ENCODE measurements at regions of chr2 and their contacts with region 1.

Region 1: GRCh38 chr2:219642465-219643080 is 15.1 kb downstream of the SLC4A3 start:
- DNase-seq: peak; percentile 87
- H3K4me3 ChIP-seq: no peak overlapping the region
- H3K27ac ChIP-seq: no peak overlapping the region
- H3K27me3 ChIP-seq: no peaks in the 10 kb centered on the region
- CTCF ChIP-seq: peak; percentile 100

Region 2: GRCh38 chr2:219543601-219544358 is 98.8 kb before region 1 on chr2 and contains the starts of genes CHPF and TMEM198:
- CTCF ChIA-PET with region 1: interaction called, 13 read pairs
- POLR2A ChIA-PET with region 1: no interaction called
- DNase-seq: peak; percentile 95
- H3K4me3 ChIP-seq: peak within 1 kb of the TSS; percentile 75
- H3K27ac ChIP-seq: peak within 1 kb of the TSS; percentile 78
- H3K27me3 ChIP-seq: no peaks in the 10 kb centered on the region
- CTCF ChIP-seq: no peak
- polyA plus RNA-seq, gene CHPF: 24.4 and 37.2 TPM in 2 replicates
- polyA plus RNA-seq, gene TMEM198: 0.83 and 1.2 TPM in 2 replicates

Region 3: GRCh38 chr2:219627103-219628100 is 15.2 kb before region 1 on chr2 and contains the start of gene SLC4A3:
- CTCF ChIA-PET with region 1: interaction called, 10 read pairs
- POLR2A ChIA-PET with region 1: no interaction called
- DNase-seq: no peak
- H3K4me3 ChIP-seq: peak within 1 kb of the TSS; percentile 60
- H3K27ac ChIP-seq: no peak within 1 kb of the TSS
- H3K27me3 ChIP-seq: peaks cover 22% of the 10 kb centered on the region
- CTCF ChIP-seq: no peak
- polyA plus RNA-seq, gene SLC4A3: 3.3 and 5.2 TPM in 2 replicates